Left lung (tissue), 14 donors: ENCODE measurements at regions of chr3 and their contacts with region 1.

Region 1: GRCh38 chr3:50542177-50543034 is 25.1 kb downstream of the C3orf18 start:
- DNase-seq: peak in 3 of 4 donors; percentile 54 to 82 (median 65)
- ATAC-seq: peak; percentile 94
- H3K4me3 ChIP-seq: no peak overlapping the region
- H3K27ac ChIP-seq: no peak overlapping the region
- H3K4me1 ChIP-seq: no peaks in the 10 kb centered on the region
- H3K27me3 ChIP-seq: peaks cover 0 to 8% of the 10 kb centered on the region in 2 donors
- CTCF ChIP-seq: peak; percentile 84 to 91

Region 2: DNA sequence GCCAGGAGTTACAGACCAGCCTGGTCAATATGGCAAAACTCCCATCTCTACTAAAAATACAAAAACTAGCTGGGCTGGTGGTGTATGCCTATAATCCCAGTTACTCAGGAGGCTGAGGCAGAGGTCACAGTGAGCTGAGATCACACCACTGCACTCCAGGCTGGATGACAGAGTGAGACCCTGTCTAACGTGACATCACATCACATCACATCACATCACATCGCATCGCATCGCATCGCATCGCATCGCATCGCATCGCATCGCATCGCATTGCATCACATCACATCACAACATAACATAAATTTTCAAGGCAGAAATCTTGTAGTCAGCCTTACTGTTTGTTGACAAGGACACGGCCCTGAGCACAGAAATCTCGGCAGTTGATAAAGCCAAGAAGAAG is 558.0 kb before region 1 on chr3:
- intact Hi-C with region 1: no loop called
- DNase-seq: no peak
- ATAC-seq: no peak
- H3K4me3 ChIP-seq: no peak overlapping the region
- H3K27ac ChIP-seq: no peak overlapping the region
- H3K4me1 ChIP-seq: no peaks in the 10 kb centered on the region
- H3K27me3 ChIP-seq: no peaks in the 10 kb centered on the region
- CTCF ChIP-seq: no peak

Region 3: DNA sequence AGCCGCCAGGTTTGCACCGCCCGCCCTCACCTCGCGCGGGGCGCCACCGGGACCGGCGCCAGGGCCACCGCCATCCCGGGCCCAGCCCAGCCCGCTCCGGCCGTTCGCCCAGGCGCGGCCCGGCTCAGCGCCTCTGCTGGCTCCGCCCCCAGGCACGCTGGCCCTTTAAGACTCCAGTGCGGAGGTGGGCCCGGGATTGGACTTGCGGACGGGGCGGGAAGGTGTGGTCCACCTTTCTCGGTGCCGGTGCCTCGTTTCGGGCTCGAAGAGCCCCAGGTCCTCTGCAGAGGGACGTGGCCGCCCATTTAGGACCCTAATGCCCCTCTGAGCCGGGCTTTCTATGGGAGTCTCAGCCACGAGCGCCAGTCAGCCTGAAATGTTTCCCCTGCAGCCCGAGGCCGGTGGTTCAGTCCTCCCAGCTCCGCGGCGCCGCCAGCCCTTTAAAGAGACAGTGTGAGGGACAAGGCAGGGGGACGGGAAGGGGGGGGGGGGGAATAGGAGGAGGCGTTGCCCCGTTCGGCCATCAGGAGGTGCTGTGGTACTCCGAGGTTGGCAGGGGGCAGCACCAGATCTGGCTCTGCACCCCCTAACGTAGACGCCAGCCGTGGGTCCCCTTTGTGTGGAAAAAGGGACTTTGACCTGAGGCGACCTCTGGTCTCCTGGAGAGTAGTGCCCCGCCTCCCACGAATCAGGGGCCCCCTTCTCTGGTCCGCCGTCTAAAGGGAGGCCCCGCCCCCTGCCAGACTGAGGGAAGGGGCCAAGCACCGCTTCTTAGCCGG is 220.9 kb before region 1 on chr3:
- intact Hi-C with region 1: no loop called
- DNase-seq: peak; percentile 89 to 96 (median 92)
- ATAC-seq: peak; percentile 73
- H3K4me3 ChIP-seq: peak overlapping the region; percentile 76 to 91
- H3K27ac ChIP-seq: peak overlapping the region; percentile 90 to 93
- H3K4me1 ChIP-seq: peaks cover 45 to 89% of the 10 kb centered on the region in 2 donors
- H3K27me3 ChIP-seq: no peaks in the 10 kb centered on the region
- CTCF ChIP-seq: peak in 1 of 2 donors; percentile 63

Region 4: DNA sequence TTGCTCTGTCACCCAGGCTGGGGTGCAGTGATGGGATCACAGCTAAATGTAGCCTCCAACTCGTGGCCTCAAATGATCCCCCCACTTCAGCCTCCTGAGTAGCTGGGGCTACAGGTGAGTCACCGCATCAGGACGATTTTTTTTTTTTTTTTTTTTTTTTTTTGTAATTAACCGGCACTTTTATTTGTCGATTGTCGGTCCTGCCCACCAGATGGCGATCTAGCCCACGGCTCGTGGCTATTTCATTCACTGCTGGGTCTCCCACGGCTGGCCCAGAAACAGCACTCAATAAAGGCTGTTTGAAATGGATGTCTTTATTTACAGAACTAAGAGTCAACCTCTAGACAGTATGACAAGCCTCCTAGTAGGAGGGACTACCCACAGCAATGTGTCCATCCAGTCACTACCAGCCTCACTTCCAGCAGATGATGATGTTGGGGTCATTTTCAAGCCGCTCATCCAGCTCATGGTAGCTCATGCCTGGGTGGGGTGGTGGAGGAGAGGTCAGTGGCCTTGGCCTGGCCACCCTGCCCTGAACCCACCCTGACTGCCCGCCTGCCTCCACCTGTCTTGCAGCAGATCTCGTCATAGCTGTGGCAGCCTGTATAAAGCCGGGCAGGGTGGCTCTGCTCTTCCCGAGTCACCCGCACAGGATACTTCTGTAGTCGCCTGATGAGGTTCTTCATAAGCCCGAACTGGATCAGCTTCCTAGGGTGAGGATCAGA is 195.1 kb before region 1 on chr3:
- intact Hi-C with region 1: loop called in 1 of 2 experiments (anchors 5 kb)
- DNase-seq: peak in 2 of 4 donors; percentile 69 to 86
- ATAC-seq: peak; percentile 15
- H3K4me3 ChIP-seq: no peak overlapping the region
- H3K27ac ChIP-seq: no peak overlapping the region
- H3K4me1 ChIP-seq: peaks cover 28 to 64% of the 10 kb centered on the region in 2 donors
- H3K27me3 ChIP-seq: no peaks in the 10 kb centered on the region
- CTCF ChIP-seq: peak; percentile 43 to 54

Region 5: DNA sequence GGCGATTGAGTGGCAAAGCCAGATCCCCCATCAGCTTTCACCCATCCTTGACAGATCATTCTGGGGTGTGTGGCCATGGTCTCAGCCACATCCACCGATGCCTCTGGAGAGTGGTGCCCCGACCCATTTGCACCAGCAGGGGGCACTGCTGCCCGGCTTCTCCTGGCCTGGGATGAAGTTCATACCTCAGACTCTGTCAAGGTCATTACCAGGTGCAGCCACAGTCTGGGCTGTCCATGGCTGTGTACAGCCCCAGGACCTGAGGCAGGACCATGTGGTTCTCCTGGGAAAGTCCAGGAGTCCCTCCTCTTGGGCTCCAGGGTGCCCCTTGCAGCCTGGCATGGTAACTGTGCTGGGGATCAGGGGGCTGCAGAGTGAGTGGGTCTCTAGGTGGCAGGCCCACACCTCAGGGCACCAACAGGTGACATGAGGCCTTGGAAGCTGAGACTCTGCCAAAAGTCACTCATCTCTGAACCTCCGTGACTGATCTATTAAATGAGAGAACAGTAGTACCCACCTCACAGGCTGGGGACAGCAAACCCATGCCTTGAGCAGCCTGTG is 106.2 kb before region 1 on chr3:
- intact Hi-C with region 1: loop called in 1 of 2 experiments (anchors 5 kb)
- DNase-seq: peak in 3 of 4 donors; percentile 61 to 91 (median 76)
- ATAC-seq: peak; percentile 90
- H3K4me3 ChIP-seq: no peak overlapping the region
- H3K27ac ChIP-seq: no peak overlapping the region
- H3K4me1 ChIP-seq: peaks cover 0 to 7% of the 10 kb centered on the region in 2 donors
- H3K27me3 ChIP-seq: no peaks in the 10 kb centered on the region
- CTCF ChIP-seq: peak; percentile 80 to 89